SK-N-SH (cell line): ENCODE measurements at regions of chr5 and their contacts with region 1.

Region 1: DNA sequence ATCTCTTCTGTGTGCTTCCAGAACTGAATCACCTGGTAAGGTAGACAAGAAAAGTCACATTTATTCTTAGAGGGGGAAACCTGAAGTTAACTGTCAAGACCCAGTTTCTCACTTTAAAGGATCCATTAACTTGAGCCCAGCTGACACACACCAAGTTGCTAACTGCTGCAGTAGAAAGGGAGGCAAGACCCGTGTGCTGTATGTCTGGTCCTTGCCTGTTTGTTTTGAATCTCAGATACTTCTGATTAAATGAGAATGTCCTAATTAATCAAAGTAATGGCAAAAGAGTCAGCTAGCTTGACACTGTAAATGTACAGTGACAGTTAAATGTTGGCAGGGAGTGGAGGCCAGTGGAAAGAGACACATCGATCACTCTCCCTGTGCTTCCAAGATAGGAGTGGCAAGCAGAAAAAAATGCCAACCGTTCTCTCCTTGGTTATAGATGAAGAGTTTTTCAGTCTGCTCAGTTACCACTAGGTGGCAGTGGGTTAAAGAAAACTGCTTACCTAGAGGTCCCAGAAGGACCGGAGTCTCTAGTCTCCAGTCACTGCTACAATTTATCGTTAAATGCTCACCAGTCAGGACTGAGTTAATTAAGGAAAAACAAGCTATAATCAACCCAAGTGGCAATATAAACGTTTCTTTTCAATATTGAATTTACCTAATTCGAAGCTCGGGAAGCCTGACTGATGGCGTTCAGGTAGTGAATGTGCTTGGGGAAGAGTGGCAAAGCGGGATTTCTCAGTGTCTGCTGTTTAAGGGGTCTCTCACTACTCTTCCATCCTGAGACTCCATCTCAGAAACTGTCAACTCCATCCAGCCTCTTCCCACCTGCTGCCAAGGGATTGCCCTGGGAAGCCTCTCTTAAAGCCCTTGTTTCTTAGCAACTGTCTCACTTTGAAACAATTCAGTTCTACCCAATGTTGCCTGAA is 18.4 kb downstream of the LSM11 start:
- DNase-seq: peak; percentile 75
- H3K4me3 ChIP-seq: peak overlapping the region in 1 of 2 experiments; percentile 25; a peak in 1 of 4 replicates
- H3K27ac ChIP-seq: no peak overlapping the region
- H3K4me1 ChIP-seq: no peaks in the 10 kb centered on the region; a peak in 1 of 4 replicates
- H3K27me3 ChIP-seq: no peaks in the 10 kb centered on the region
- CTCF ChIP-seq: peak; percentile 80
- EP300 ChIP-seq: no peak
- RAD21 ChIP-seq: peak; percentile 84

Region 2: DNA sequence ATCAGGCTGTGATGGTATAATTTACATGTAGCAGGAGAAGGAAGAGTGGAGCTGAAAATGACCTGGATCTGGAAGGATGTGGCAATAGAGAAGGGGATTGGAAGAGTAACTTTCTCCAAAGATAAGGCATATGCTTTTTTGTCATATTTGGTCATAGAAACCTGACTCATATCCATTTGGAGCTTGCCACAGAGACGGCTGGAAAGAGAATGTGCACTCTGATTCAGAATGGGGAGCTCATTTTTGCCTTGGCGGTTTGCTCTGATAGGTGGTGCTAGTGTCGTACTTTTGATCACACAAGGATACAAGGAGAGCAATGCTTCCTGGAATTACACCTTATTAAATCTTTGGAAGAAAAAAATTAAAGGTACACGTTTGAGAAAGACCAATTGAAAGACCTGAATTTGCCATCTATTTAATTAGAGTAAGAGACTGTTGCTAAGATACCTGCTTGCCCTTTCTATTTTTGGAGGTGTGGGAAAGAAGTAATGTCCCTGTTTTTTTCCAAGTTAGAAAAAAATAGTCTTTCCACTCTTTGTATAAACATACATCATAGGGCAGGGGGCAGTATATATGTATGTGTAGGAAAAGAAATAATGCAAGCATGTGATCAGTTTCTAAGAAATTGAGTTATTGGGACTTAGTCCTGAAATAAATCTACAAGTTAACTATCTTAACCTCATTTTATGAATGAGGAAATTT is 13.0 kb before region 1 on chr5:
- CTCF ChIA-PET with region 1: interaction called, 41 read pairs
- POLR2A ChIA-PET with region 1: no interaction called
- DNase-seq: no peak
- H3K4me3 ChIP-seq: no peak overlapping the region
- H3K27ac ChIP-seq: peak overlapping the region in 1 of 2 experiments; percentile 81; a peak in 2 of 4 replicates
- H3K4me1 ChIP-seq: peaks cover 15% of the 10 kb centered on the region in 2 experiments; a peak in 3 of 4 replicates
- H3K27me3 ChIP-seq: no peaks in the 10 kb centered on the region
- CTCF ChIP-seq: peak; percentile 42
- EP300 ChIP-seq: no peak
- RAD21 ChIP-seq: 0 out of 2 replicates have a peak, but pooled peaks have one; percentile 11

Region 3: DNA sequence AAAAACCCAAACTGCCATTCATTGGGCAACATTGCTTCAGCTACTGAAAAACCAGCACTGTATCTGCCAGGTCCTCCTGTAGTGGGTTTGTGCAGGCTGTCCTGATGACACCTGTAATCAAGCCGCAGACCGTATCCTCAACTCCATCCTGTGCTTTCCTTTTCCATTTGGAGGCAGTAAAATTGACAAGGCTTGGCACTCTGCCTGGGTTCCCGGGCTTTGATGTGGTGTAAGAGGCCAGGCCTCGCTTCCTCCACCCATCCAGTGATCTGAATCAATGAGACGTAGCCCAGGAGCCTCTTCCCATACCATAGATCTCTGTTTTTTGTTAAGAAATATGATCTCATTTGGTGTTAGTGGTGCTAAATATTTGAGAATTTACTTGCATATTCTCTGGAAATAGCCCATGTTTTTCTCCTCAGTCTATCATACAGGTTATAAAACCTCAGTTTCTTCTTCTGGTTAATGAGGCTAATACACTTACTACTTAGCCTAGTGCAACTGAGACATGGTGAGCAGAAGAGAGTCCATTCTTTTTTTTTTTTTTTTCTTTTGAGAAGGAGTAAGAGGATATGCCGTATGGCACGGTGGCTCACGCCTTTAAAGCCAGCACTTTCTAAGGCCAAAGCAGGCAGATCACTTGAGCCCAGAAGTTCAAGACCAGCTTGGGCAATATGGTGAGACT is 16.3 kb after region 1 on chr5:
- CTCF ChIA-PET with region 1: interaction called, 28 read pairs
- POLR2A ChIA-PET with region 1: no interaction called
- DNase-seq: peak; percentile 43
- H3K4me3 ChIP-seq: no peak overlapping the region
- H3K27ac ChIP-seq: no peak overlapping the region
- H3K4me1 ChIP-seq: peaks cover 0 to 3% of the 10 kb centered on the region in 2 experiments; a peak in 1 of 4 replicates
- H3K27me3 ChIP-seq: no peaks in the 10 kb centered on the region
- CTCF ChIP-seq: no peak
- EP300 ChIP-seq: peak; percentile 18 to 32; a peak in 2 of 4 replicates
- RAD21 ChIP-seq: no peak

Region 4: DNA sequence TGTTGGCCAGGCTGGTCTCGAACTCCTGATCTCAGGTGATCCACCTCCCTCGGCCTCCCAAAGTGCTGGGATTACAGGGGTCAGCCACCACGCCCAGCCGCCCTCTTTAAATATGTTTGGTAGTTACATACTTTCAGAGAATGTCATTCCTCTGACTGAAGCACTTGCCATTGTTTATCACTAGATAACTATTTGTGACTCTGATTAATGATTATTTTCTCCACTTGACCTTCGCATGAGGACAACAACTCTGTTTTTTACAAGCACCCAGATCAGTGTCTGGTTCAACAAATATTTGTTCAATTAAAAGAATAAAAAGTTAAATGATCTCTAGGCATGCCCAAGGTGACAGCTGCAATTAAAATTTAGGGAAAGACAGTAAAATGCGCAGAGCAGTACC is 40.8 kb after region 1 on chr5:
- CTCF ChIA-PET with region 1: interaction called, 12 read pairs
- POLR2A ChIA-PET with region 1: no interaction called
- DNase-seq: no peak
- H3K4me3 ChIP-seq: no peak overlapping the region
- H3K27ac ChIP-seq: no peak overlapping the region
- H3K4me1 ChIP-seq: no peaks in the 10 kb centered on the region; a peak in 1 of 4 replicates
- H3K27me3 ChIP-seq: no peaks in the 10 kb centered on the region
- CTCF ChIP-seq: no peak
- EP300 ChIP-seq: no peak
- RAD21 ChIP-seq: no peak

Region 5: DNA sequence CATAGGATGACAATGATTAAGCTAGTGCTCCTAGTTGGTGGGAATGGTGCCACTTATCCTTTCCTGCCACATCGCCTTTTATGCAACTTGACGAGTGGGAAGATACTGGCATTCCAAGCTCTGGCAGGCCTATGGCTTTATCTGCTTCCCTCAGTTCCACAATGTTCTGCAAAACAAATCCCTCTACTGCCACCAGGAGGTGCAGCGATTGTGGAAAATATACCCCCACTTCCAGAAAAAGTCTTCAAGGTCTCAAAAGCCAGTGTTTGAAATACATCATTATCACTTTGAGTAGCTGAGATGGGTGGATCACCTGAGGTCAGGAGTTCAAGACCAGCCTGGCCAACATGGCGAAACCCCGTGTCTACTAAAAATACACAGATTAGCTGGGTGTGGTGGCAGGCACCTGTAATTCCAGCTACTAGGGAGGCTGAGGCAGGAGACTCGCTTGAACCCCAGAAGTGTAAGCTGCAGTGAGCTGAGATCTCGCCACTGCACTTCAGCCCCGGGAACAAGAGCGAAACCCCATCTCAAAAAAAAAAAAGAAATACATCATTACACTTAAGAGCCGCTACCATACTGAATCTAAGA is 93.5 kb after region 1 on chr5:
- CTCF ChIA-PET with region 1: interaction called, 14 read pairs
- POLR2A ChIA-PET with region 1: no interaction called
- DNase-seq: peak; percentile 70
- H3K4me3 ChIP-seq: no peak overlapping the region
- H3K27ac ChIP-seq: no peak overlapping the region
- H3K4me1 ChIP-seq: peaks cover 0 to 8% of the 10 kb centered on the region in 2 experiments; a peak in 2 of 4 replicates
- H3K27me3 ChIP-seq: no peaks in the 10 kb centered on the region
- CTCF ChIP-seq: peak; percentile 71
- EP300 ChIP-seq: no peak
- RAD21 ChIP-seq: peak; percentile 71

Region 6: DNA sequence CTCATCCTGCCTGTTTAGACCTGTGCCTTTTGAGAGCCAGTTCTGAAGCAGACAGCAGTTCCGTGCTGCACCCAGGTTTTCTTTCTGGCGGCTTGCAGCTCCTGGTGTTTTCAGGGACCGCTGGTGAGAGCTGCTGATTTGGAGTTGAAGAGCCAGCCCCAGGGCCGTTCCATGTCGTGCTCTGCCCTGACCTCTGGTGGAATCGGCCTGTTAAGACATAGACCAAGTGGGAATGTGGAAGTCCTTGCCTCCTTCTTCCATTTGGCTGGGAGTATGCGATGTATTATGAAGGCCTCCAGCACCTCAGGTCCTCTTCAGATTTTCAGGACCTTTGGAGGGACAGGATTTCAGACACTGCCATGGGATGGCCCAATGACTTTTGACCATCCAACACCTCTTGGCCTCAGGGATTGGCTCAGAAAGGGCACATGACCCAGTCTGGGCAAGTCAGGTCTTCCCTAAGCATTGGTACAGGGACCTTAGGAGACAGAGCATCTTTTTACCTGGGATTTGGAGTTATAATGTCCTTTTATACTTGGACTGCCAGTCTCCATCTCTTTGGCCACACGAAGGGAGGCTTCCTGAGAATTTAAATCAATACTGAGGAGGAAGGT is 233.1 kb after region 1 on chr5:
- CTCF ChIA-PET with region 1: interaction called, 18 read pairs
- POLR2A ChIA-PET with region 1: no interaction called
- DNase-seq: peak; percentile 78
- H3K4me3 ChIP-seq: no peak overlapping the region
- H3K27ac ChIP-seq: no peak overlapping the region
- H3K4me1 ChIP-seq: no peaks in the 10 kb centered on the region
- H3K27me3 ChIP-seq: no peaks in the 10 kb centered on the region
- CTCF ChIP-seq: peak; percentile 71
- EP300 ChIP-seq: no peak
- RAD21 ChIP-seq: peak; percentile 84

Region 7: DNA sequence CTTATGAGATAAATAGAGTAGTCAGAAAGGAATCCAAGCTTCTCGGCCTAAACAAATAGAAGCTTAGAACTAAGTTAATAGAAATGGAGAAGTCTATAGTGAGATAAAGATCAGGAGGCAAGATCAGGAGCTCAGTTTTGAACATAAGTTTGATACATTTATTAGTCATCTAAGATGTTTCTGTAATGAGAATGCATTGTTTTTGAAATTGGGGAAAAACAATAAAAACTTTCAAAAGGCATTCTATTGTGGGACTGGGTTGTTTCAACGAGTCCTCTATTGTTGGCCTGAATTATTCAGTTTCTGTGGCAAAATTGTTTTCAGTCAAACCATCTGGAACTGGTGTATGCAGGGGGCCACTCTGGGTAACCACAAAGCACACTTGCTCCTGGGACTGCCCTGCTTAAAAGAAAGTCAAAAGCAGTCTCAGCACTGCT is 278.0 kb after region 1 on chr5:
- CTCF ChIA-PET with region 1: no interaction called
- POLR2A ChIA-PET with region 1: no interaction called
- DNase-seq: no peak
- H3K4me3 ChIP-seq: no peak overlapping the region
- H3K27ac ChIP-seq: peak overlapping the region in 1 of 2 experiments; percentile 20; a peak in 1 of 4 replicates
- H3K4me1 ChIP-seq: no peaks in the 10 kb centered on the region
- H3K27me3 ChIP-seq: no peaks in the 10 kb centered on the region
- CTCF ChIP-seq: no peak
- EP300 ChIP-seq: no peak
- RAD21 ChIP-seq: no peak

Region 8: DNA sequence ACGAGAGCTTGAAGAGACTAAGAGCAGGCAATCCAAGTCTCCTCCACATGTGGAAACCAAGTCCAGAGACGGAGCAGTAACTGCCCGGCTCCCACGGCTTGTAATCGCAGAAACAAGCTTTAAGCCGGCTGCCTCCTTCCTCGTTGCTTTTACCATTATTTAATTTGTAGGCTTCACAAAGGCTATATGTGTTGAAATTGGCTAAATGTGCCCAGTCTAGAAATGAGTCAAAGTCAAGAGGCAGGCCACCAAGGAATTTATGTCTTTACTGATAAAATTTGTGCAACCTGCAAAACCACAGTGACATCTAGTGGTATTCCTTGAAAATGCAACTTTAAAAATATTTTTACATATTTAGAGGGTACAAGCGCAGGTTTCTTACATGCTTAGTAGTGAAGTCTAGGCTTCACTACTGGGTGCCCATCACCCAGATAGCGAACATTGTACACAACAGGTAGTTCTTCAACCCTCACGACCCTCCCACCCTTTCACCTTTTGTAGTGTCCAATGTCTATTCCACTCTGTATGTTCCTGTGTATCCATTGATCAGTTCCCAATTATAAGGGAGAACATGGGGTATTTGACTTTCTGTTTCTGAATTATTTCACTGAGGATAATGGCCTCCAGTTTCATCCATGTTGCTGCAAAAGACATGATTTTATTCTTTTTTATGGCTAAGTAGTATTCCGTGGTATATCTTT is 1371.2 kb after region 1 on chr5:
- CTCF ChIA-PET with region 1: interaction called, 19 read pairs
- POLR2A ChIA-PET with region 1: no interaction called
- DNase-seq: peak; percentile 32
- H3K4me3 ChIP-seq: no peak overlapping the region; a peak in 1 of 4 replicates
- H3K27ac ChIP-seq: no peak overlapping the region
- H3K4me1 ChIP-seq: no peaks in the 10 kb centered on the region; a peak in 2 of 4 replicates
- H3K27me3 ChIP-seq: no peaks in the 10 kb centered on the region; the same call in 1 of the 2 replicates
- CTCF ChIP-seq: peak; percentile 84
- EP300 ChIP-seq: no peak
- RAD21 ChIP-seq: peak; percentile 89